PC-9 (cell line): ENCODE measurements at regions of chr7 and their contacts with region 1.

Region 1: DNA sequence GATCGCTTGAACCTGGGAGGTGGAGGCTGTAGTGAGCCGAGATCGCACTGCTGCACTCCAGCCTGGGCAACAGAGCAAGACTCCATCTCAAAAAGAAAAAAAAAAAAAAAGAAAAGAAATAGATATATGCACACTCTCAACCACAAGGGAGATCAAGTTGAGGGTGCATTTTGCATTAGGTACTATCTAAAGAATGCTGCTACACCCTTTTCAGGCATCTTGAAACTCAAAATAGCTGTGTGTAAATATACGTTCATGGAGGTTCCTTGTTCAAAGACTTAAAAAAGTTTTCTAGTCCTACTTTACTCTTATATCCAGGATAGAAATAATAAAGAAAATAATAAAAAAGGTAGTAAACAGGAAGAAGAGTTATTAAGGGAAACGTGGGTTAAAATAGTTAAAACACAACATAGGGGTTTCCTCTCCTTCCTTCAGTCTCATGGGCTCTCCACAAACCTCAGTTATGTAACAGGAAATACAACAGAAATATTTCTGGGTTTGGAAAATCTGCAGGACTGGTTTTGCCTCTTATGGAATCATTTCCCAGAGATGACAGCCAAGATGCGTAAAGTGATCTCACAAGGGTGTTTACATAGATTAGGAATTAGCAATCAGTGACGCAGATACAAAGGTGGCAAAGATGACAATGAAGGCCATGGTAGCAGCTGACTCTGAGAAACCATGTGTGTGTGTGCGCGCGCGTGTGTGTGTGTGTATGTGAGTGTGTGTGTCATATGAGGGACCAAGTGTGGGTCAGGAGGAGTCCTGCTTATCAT is 15.1 kb downstream of the STEAP4 start:
- DNase-seq: peak; percentile 85 to 97
- H3K4me3 ChIP-seq: no peak overlapping the region; the same call in 1 of the 2 replicates
- H3K27ac ChIP-seq: peak overlapping the region; percentile 97
- H3K4me1 ChIP-seq: peaks cover 58% of the 10 kb centered on the region
- H3K27me3 ChIP-seq: no peaks in the 10 kb centered on the region
- CTCF ChIP-seq: no peak

Region 2: DNA sequence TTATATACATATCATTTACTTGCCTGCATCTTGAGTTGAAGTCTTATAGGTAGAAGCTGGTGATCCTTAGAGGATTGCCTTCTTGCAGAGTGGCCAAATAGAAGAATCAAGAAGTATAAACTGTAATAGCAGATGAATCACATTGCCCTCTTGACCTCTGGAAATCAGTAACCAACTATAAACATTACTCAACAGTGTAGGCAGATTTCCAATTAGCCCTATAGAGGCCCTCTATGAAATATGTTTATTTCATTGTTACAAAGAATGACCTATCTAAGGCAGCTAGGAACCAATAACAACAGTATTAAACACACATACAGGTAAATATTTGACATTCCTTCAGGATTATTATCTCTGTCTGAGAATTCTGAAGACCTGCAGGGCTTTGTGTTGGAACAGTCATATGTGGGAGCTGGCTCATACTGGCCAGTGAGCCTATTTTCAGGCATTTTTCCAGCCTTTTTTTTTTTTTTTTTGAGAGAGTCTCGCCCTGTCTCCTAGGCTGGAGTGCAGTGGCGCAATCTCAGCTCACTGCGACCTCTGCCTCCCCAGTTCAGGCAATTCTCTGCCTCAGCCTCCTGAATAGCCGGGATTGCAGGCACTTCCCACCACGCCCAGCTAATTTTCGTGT is 64.6 kb before region 1 on chr7:
- CTCF ChIA-PET with region 1: no interaction called
- POLR2A ChIA-PET with region 1: interaction called, 3 read pairs
- intact Hi-C with region 1: loop called (anchors 1 kb)
- DNase-seq: peak; percentile 83 to 99
- H3K4me3 ChIP-seq: peak overlapping the region; percentile 15; the same call in 1 of the 2 replicates
- H3K27ac ChIP-seq: peak overlapping the region; percentile 95
- H3K4me1 ChIP-seq: peaks cover 43% of the 10 kb centered on the region
- H3K27me3 ChIP-seq: no peaks in the 10 kb centered on the region
- CTCF ChIP-seq: no peak

Region 3: DNA sequence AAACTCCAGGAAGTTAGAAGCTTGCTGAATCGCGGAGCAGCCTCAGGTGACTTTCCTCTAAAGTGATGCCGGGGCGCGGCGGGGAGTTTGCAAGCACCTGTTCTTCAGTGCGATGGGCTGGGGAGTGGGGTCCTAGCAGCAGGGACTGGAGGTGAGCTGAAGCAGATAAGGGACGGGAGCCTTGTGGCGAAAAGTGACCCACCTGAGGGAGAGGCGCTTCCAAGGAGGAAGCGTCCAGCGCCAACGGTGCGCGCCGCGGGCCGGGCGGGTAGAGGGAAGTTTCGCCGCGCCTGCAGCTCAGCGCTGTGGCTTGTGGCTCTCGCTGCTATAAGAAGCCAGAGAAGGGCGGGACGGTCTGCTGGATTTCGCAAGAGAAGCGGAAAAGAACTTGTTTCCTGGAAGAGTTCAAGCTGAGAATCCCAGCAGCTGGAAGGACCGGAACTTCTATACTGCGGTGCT is 15.0 kb after region 1 on chr7 and contains the start of gene STEAP4:
- CTCF ChIA-PET with region 1: no interaction called
- POLR2A ChIA-PET with region 1: interaction called, 7 read pairs
- intact Hi-C with region 1: loop called (anchors 1 kb)
- DNase-seq: peak; percentile 78 to 89
- H3K4me3 ChIP-seq: peak within 1 kb of the TSS; percentile 58
- H3K27ac ChIP-seq: peak within 1 kb of the TSS; percentile 37
- H3K4me1 ChIP-seq: peaks cover 16% of the 10 kb centered on the region
- H3K27me3 ChIP-seq: no peaks in the 10 kb centered on the region
- CTCF ChIP-seq: no peak
- total RNA-seq, gene STEAP4: 10.3 and 12.1 TPM in 2 replicates

Region 4: DNA sequence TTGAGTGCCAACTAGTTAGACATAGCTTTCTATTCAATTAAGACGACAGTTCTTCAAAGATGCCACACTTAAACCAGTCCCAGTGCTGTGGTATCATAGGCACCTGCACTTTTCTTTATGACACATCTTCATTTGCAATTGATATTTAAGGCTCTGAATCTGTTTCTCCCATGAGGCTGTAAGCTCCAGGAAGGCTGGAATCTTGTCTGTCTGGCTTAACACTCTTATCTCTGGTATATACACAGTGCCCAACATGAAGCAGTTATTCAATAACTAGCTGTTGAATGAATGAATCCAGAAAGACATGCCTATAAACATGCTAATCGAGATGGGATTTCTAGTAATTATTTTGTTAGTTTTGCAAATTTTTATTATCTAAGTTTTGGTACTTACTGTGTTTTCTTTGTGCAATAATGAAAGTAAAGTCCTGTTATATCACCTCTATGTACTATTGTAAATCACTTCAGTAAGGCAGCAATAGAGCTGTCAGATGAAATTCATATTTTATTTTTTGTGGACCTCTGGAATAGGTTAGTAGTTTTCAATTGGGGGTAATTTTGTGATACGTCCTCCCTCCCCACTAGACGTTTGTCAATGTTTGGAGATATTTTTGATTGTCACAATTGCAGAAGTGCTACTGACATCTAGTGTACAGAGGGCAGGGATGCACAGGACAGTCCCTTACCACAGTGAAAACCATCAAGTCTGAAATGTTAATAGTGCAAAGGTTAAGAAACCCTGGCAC is 66.4 kb after region 1 on chr7:
- CTCF ChIA-PET with region 1: no interaction called
- POLR2A ChIA-PET with region 1: no interaction called
- intact Hi-C with region 1: loop called (anchors 1 kb)
- DNase-seq: no peak
- H3K4me3 ChIP-seq: no peak overlapping the region
- H3K27ac ChIP-seq: no peak overlapping the region
- H3K4me1 ChIP-seq: peaks cover 15% of the 10 kb centered on the region
- H3K27me3 ChIP-seq: no peaks in the 10 kb centered on the region
- CTCF ChIP-seq: peak; percentile 70

Region 5: DNA sequence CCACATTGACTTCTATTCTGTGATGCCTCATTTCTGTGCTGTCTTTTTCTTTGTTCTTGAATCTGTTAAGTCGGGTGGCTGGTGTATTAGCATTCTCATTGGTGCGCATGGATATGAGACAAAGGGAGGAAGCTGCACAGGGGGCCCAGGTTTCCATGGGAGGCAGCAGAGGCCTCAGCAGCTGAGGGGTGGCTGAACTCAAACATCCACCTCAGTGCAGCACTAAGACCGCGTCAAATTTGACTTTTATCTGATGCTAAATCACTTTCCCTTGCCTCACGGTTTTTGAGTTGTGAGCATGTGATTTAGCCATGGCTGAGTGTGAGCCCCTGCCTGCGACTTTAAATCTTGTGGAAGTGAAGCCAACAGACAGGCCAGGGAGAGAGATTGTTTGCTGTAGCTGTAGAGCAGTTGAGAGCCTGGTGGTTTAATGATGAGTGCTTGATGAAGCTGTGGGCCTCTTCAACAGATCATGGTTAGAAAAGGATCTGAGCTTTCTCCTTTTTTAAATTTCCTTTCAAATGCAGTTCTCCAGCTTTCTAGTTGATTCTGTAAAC is 274.7 kb after region 1 on chr7:
- CTCF ChIA-PET with region 1: no interaction called
- POLR2A ChIA-PET with region 1: no interaction called
- intact Hi-C with region 1: no loop called
- DNase-seq: no peak
- H3K4me3 ChIP-seq: no peak overlapping the region
- H3K27ac ChIP-seq: no peak overlapping the region
- H3K4me1 ChIP-seq: no peaks in the 10 kb centered on the region
- H3K27me3 ChIP-seq: no peaks in the 10 kb centered on the region
- CTCF ChIP-seq: no peak